ENCODE measurements at regions of chr1 and their contacts with region 1.

Region 1: GRCh38 chr1:181189691-181190363 is 101.3 kb downstream of the IER5 start:
- DNase-seq: no peak
- H3K4me3 ChIP-seq: peak overlapping the region; percentile 22
- H3K27me3 ChIP-seq: peaks cover 6% of the 10 kb centered on the region
- CTCF ChIP-seq: peak; percentile 90

Region 2: DNA sequence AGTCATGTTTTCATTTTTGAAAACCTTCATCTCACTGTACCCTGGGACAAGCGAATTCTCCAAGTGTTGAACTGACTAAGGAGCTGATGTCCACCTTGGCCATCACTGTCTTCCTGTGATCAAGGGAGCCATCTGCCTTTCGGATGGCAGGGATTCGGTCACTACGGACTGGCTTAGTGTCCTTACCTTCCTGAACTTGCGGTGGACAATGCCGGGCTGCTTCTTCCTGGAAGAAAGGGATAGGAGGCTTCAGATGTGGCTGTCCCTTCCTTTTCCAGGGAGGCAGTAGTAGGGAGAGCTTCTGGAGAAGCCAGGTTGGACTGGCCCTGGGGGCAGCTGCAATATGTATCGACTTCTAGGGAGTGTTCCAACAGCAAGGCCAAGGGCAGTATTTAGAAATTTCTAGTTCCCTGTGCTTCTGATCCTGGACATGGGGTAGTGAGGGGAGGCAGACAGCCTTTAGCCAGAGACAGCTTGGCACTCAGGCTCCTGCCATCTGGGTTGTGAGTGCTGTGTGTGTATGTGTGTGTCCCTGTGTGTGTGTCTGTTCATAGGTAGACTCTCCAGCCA is 13.2 kb after region 1 on chr1:
- CTCF ChIA-PET with region 1: interaction called, 16 read pairs
- POLR2A ChIA-PET with region 1: no interaction called
- DNase-seq: no peak
- H3K4me3 ChIP-seq: no peak overlapping the region
- H3K27me3 ChIP-seq: no peaks in the 10 kb centered on the region
- CTCF ChIP-seq: no peak

Region 3: GRCh38 chr1:181416268-181416860 is 226.5 kb after region 1 on chr1:
- CTCF ChIA-PET with region 1: interaction called, 10 read pairs
- POLR2A ChIA-PET with region 1: no interaction called
- DNase-seq: no peak
- H3K4me3 ChIP-seq: no peak overlapping the region
- H3K27me3 ChIP-seq: no peaks in the 10 kb centered on the region
- CTCF ChIP-seq: no peak

Region 4: GRCh38 chr1:181424786-181425403 is 235.1 kb after region 1 on chr1:
- CTCF ChIA-PET with region 1: interaction called, 85 read pairs
- POLR2A ChIA-PET with region 1: no interaction called
- DNase-seq: peak; percentile 1
- H3K4me3 ChIP-seq: no peak overlapping the region
- H3K27me3 ChIP-seq: no peaks in the 10 kb centered on the region
- CTCF ChIP-seq: peak; percentile 95

Region 5: DNA sequence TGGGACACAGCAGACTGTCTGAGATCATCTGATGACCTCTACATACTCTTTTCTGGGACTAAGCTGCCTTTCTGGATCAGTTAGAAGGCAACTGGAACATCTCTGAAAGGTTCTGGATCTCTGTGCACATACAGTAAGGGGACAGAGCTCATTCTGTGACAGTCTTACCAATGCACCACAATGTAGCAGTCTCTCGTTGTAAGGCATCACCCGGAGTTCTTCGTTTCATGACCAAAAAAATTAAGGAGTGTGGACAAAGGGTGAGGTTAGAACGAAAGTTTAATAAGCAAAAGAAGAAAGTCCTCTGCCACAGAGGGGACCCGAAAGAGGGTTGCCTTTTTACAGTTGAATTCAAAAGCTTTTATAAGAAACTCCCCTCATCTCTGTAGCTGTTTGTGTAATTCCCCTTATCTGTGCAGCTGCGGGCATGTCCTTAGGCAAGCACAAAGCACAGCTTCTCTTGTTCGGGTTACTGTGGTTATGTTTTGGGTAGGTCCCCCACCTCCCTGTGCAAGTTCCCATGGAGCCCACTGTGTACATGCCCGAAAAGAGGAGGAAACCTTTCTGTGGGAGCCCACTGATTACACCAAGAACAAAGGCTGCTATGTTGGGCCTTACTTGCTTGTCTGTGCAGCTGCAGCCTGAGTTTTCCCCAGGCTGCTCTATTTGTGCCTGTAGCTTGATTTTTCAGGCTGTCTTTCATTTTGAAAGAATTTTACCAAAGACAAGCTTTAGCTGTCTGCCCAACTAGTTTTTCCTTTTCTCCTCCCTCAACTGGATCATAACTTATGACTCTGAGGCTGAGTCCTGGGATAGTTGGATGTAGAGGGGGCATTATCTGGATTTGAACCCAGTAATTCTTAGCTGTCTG is 240.4 kb after region 1 on chr1:
- CTCF ChIA-PET with region 1: interaction called, 85 read pairs
- POLR2A ChIA-PET with region 1: no interaction called
- DNase-seq: no peak
- H3K4me3 ChIP-seq: no peak overlapping the region
- H3K27me3 ChIP-seq: no peaks in the 10 kb centered on the region
- CTCF ChIP-seq: no peak